ENCODE measurements at regions of chr6 and their contacts with region 1.

Region 1: GRCh38 chr6:20173833-20174792 is 38.2 kb downstream of the MBOAT1 start:
- DNase-seq: no peak
- ATAC-seq: no peak
- H3K4me3 ChIP-seq: no peak overlapping the region
- H3K27ac ChIP-seq: no peak overlapping the region
- H3K4me1 ChIP-seq: no peaks in the 10 kb centered on the region
- H3K27me3 ChIP-seq: no peaks in the 10 kb centered on the region
- CTCF ChIP-seq: no peak

Region 2: GRCh38 chr6:18242062-18242851 is 1931.9 kb before region 1 on chr6:
- CTCF ChIA-PET with region 1: no interaction called
- POLR2A ChIA-PET with region 1: interaction called, 10 read pairs
- in situ Hi-C with region 1: no loop called
- intact Hi-C with region 1: no loop called
- DNase-seq: no peak
- ATAC-seq: peak; percentile 82
- H3K4me3 ChIP-seq: no peak overlapping the region
- H3K27ac ChIP-seq: peak overlapping the region; percentile 36; the same call in 1 of the 2 replicates
- H3K4me1 ChIP-seq: peaks cover 4% of the 10 kb centered on the region; the same call in 1 of the 2 replicates
- H3K27me3 ChIP-seq: no peaks in the 10 kb centered on the region
- CTCF ChIP-seq: no peak

Region 3: GRCh38 chr6:19925533-19925932 is 248.6 kb before region 1 on chr6:
- CTCF ChIA-PET with region 1: no interaction called
- POLR2A ChIA-PET with region 1: no interaction called
- in situ Hi-C with region 1: no loop called
- intact Hi-C with region 1: no loop called
- DNase-seq: no peak
- ATAC-seq: no peak
- H3K4me3 ChIP-seq: no peak overlapping the region
- H3K27ac ChIP-seq: no peak overlapping the region
- H3K4me1 ChIP-seq: no peaks in the 10 kb centered on the region
- H3K27me3 ChIP-seq: peaks cover 13% of the 10 kb centered on the region
- CTCF ChIP-seq: no peak

Region 4: GRCh38 chr6:20534295-20535262 is 360.5 kb after region 1 on chr6 and contains the start of gene CDKAL1:
- CTCF ChIA-PET with region 1: no interaction called
- POLR2A ChIA-PET with region 1: no interaction called
- in situ Hi-C with region 1: no loop called
- intact Hi-C with region 1: no loop called
- DNase-seq: peak; percentile 73
- ATAC-seq: peak; percentile 94
- H3K4me3 ChIP-seq: peak within 1 kb of the TSS; percentile 94 to 95
- H3K27ac ChIP-seq: peak within 1 kb of the TSS; percentile 95
- H3K4me1 ChIP-seq: peaks cover 8% of the 10 kb centered on the region
- H3K27me3 ChIP-seq: no peaks in the 10 kb centered on the region
- CTCF ChIP-seq: no peak
- total RNA-seq, gene CDKAL1: 14.5 TPM